Psoas muscle (tissue), 8 donors: ENCODE measurements at regions of chr15 and their contacts with region 1.

Region 1: DNA sequence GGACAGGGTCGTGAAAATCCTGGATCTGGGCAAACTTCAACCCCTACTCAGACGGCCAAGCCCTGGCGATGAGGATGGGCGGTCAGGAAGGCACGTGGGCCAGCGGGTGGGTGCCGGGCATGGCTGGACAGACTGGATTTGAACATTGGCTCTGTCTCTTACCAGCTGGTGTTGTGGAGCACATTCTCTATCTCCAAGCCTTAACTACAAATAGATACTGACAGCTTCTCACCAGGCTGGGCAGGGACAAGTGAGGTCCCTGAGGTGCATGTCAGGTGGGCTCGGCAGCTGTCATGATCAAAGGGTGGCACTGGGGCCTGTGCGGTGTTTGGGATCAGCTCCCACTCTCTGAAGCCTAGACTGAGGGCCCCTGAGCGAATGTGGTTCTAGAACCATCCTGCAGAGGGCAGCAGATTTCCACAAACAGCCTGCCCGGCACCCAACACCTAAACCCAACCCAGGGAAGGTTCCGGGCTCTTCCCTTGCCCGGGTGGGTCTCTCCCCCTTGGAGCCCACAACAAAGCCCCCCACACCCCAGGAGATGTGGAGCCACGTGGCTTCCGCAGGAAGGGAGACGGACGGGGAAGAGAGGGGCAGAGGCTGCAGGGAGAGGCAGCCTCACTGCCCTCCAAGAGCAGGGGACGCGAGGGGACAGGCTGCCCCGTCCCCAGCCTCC is 58.4 kb downstream of the RGMA start:
- DNase-seq: peak; percentile 71 to 87
- ATAC-seq: peak; percentile 60 to 71 (median 64)
- H3K4me3 ChIP-seq: peak overlapping the region; percentile 37
- H3K27ac ChIP-seq: peak overlapping the region; percentile 90
- H3K4me1 ChIP-seq: peaks cover 55% of the 10 kb centered on the region
- H3K27me3 ChIP-seq: no peaks in the 10 kb centered on the region
- CTCF ChIP-seq: peak; percentile 83

Region 2: GRCh38 chr15:92448370-92448769 is 582.2 kb before region 1 on chr15:
- intact Hi-C with region 1: no loop called
- DNase-seq: no peak
- ATAC-seq: no peak
- H3K4me3 ChIP-seq: no peak overlapping the region
- H3K27ac ChIP-seq: no peak overlapping the region
- H3K4me1 ChIP-seq: no peaks in the 10 kb centered on the region
- H3K27me3 ChIP-seq: no peaks in the 10 kb centered on the region
- CTCF ChIP-seq: no peak

Region 3: DNA sequence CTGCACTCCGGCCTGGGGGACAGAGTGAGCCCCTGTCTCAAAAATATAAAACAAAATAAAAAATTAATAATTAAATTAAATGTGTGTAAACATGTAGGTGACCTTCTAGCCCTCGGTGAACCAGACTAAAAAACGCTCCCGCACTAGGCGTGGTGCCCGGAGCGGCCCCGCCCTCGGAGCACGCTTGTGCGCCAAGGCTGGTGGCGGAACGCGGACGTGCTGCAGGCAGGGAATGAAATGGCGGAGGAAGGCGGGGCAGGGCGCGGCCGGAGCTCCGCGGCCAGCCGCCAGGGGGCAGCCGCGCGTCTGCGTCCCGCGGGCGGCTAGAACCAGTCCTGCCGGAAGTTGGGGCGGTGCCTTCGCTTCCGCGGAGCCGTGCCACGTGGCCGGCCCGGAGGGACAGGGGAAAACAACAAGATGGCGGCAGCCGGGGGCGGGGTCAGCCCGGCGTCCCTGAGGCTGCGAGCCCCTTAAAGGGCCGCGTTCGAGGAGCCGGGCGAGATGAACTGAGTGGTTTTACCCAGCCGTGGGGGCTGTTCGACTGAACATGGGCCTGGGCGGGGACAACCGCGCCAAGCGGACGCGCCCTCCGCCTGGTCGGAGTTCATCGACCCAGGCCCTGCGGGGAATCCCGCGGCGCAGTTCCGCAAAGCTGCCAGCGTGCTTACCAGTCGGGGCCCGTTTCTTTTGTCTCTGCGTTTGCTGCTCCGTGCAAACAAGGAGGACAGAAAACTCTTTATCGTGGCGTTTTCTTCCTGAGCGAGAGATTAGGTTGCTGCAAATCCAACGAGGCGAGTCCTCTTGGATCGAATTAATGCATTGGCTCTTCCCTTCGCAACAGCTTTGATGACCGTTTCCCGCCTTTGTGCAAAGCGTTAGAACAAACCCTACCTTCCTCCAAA is 221.3 kb before region 1 on chr15:
- intact Hi-C with region 1: loop called (anchors 5 to 10 kb)
- DNase-seq: peak; percentile 99 to 100
- ATAC-seq: peak; percentile 82 to 91 (median 84)
- H3K4me3 ChIP-seq: peak overlapping the region; percentile 67
- H3K27ac ChIP-seq: peak overlapping the region; percentile 92
- H3K4me1 ChIP-seq: peaks cover 17% of the 10 kb centered on the region
- H3K27me3 ChIP-seq: no peaks in the 10 kb centered on the region
- CTCF ChIP-seq: peak; percentile 98

Region 4: GRCh38 chr15:93217343-93217742 is 186.8 kb after region 1 on chr15:
- intact Hi-C with region 1: loop called in 1 of 2 experiments (anchors 10 kb)
- DNase-seq: peak; percentile 58 to 81
- ATAC-seq: peak; percentile 86 to 92 (median 88)
- H3K4me3 ChIP-seq: no peak overlapping the region
- H3K27ac ChIP-seq: peak overlapping the region; percentile 77
- H3K4me1 ChIP-seq: peaks cover 29% of the 10 kb centered on the region
- H3K27me3 ChIP-seq: no peaks in the 10 kb centered on the region
- CTCF ChIP-seq: no peak

Region 5: DNA sequence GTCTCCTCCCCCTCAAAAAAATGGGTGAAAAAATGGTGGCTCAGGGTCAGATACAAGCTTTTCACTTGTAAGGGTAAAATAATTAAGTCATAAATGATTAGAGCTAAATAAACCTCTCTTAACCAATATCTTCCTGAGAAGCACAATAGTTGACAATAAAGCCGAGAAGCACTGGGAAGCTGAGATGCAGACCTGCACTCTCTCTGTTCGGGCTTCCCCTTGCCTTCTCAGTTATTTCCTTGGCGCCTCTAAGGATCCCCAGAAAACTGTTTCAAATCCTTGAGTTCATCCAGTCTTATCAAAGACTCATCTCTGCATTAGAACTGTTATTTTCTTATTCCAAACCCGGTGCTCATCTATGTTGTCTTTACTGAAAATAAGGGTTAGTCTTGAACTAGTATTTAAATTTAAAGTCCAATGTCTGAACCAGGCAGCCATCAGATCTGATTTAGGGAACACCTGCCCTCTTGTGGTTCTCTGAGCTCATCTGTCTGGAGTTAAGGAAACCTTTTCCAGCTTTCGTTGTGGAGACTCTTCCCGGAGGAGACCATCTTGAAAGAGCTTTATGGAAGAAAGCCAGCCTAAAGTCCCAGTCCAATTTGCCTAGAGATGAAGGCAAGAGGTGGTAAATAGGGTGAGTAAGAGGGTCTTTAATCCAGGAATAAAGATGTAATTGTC is 944.4 kb after region 1 on chr15:
- intact Hi-C with region 1: loop called (anchors 5 to 10 kb)
- DNase-seq: no peak
- ATAC-seq: peak in 2 of 4 donors; percentile 55 to 72
- H3K4me3 ChIP-seq: no peak overlapping the region
- H3K27ac ChIP-seq: no peak overlapping the region
- H3K4me1 ChIP-seq: no peaks in the 10 kb centered on the region
- H3K27me3 ChIP-seq: no peaks in the 10 kb centered on the region
- CTCF ChIP-seq: peak; percentile 43

Region 6: DNA sequence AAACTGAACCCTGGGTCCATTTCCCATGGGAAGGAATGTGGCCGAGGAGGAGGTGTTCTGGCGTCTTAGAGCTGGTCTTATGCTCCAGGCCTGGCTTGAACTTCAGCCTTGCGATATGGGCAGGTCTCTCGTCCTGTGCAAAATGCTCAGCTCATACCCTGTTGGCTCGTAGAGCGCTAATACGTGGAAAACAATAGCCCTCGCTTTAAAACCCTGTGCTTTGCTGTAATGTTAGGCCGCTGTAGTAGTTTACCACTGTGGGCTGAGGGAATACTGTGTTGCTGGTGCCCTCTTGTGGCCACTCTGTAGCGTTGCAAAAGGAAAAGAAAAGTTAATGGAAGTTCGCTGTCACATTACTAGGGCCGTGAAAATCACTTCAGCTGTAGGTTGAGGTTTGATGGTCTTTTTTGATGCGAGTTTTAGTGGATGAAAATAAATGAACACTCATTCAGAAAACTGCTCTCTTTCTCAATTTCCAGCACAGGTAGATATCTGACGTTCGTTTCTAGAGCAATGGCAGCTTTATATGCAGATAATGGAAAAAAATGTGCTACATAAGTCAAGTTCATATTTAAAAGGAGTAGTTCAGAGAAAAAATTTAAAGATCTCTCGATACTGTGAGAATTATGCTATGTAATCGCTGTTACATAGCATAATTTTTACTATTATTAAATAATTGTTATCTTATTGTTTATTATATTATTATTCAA is 1293.7 kb after region 1 on chr15:
- intact Hi-C with region 1: loop called in 1 of 2 experiments (anchors 5 kb)
- DNase-seq: peak in 1 of 2 donors; percentile 21
- ATAC-seq: peak; percentile 71 to 92 (median 87)
- H3K4me3 ChIP-seq: no peak overlapping the region
- H3K27ac ChIP-seq: no peak overlapping the region
- H3K4me1 ChIP-seq: no peaks in the 10 kb centered on the region
- H3K27me3 ChIP-seq: no peaks in the 10 kb centered on the region
- CTCF ChIP-seq: peak; percentile 81